T-cell (primary cell): ENCODE measurements at regions of chr15 and their contacts with region 1.

Region 1: GRCh38 chr15:41695750-41696426 is 35.7 kb downstream of the MGA start:
- DNase-seq: peak in 34 of 35 experiments; percentile 1 to 73 (median 44)
- ATAC-seq: peak; percentile 90 to 98 (median 96)
- H3K4me3 ChIP-seq: peak overlapping the region in 1 of 2 donors; percentile 6
- H3K4me3 Mint-ChIP-seq: peak overlapping the region; percentile 10 to 38 (median 10)
- H3K27ac ChIP-seq: peak overlapping the region; percentile 52
- H3K27ac Mint-ChIP-seq: peak overlapping the region; percentile 75 to 82
- H3K4me1 ChIP-seq: peaks cover 6 to 7% of the 10 kb centered on the region in 2 experiments
- H3K4me1 Mint-ChIP-seq: peaks cover 50 to 72% (median 54%) of the 10 kb centered on the region in 3 donors
- H3K27me3 ChIP-seq: no peaks in the 10 kb centered on the region
- H3K27me3 Mint-ChIP-seq: no peaks in the 10 kb centered on the region

Region 2: GRCh38 chr15:41557673-41558399 is 138.1 kb before region 1 on chr15:
- CTCF ChIA-PET with region 1: interaction called in 1 of 2 experiments, 3 read pairs
- POLR2A ChIA-PET with region 1: interaction called, 6 to 12 read pairs
- DNase-seq: peak; percentile 59 to 84 (median 74)
- ATAC-seq: peak; percentile 81 to 91 (median 83)
- H3K4me3 ChIP-seq: peak overlapping the region; percentile 43 to 52
- H3K4me3 Mint-ChIP-seq: peak overlapping the region; percentile 84 to 89 (median 86)
- H3K27ac ChIP-seq: peak overlapping the region; percentile 51
- H3K27ac Mint-ChIP-seq: peak overlapping the region; percentile 93 to 94
- H3K4me1 ChIP-seq: peaks cover 8 to 22% of the 10 kb centered on the region in 2 experiments
- H3K4me1 Mint-ChIP-seq: peaks cover 20 to 29% (median 23%) of the 10 kb centered on the region in 3 donors
- H3K27me3 ChIP-seq: peaks cover 2 to 34% of the 10 kb centered on the region in 2 experiments
- H3K27me3 Mint-ChIP-seq: peaks cover 10 to 21% of the 10 kb centered on the region in 2 donors

Region 3: GRCh38 chr15:41656188-41656587 is 39.7 kb before region 1 on chr15:
- CTCF ChIA-PET with region 1: no interaction called
- POLR2A ChIA-PET with region 1: no interaction called
- DNase-seq: no peak
- ATAC-seq: no peak
- H3K4me3 ChIP-seq: no peak overlapping the region
- H3K4me3 Mint-ChIP-seq: no peak overlapping the region
- H3K27ac ChIP-seq: no peak overlapping the region
- H3K27ac Mint-ChIP-seq: no peak overlapping the region
- H3K4me1 ChIP-seq: peaks cover 3 to 17% of the 10 kb centered on the region in 2 experiments
- H3K4me1 Mint-ChIP-seq: peaks cover 15 to 21% (median 17%) of the 10 kb centered on the region in 3 donors
- H3K27me3 ChIP-seq: peaks cover 0 to 3% of the 10 kb centered on the region in 2 experiments
- H3K27me3 Mint-ChIP-seq: peaks cover 0 to 3% of the 10 kb centered on the region in 2 donors

Region 4: DNA sequence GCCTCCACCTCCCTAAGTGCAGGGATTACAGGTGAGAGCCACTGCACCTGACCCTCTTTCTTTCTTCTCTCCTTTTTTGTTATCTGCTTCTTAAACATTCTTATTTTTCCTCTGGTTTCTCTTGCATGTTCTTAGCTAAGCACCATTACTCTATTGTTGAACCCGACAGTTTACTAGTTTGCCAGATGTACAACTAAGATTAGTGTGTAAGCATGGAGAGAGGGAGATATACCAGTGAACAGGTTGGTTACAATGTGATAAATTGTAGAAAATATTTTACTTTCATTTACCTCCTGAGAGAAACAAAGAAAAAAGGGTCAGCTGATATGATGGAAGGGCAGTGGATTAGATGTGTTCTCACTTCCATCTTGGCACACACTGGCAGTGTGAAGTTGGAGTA is 857.7 kb after region 1 on chr15:
- CTCF ChIA-PET with region 1: no interaction called
- POLR2A ChIA-PET with region 1: no interaction called
- DNase-seq: no peak
- ATAC-seq: no peak
- H3K4me3 ChIP-seq: no peak overlapping the region
- H3K4me3 Mint-ChIP-seq: no peak overlapping the region
- H3K27ac ChIP-seq: no peak overlapping the region
- H3K27ac Mint-ChIP-seq: no peak overlapping the region
- H3K4me1 ChIP-seq: peaks cover 2 to 10% of the 10 kb centered on the region in 2 experiments
- H3K4me1 Mint-ChIP-seq: peaks cover 30 to 41% (median 39%) of the 10 kb centered on the region in 3 donors
- H3K27me3 ChIP-seq: no peaks in the 10 kb centered on the region
- H3K27me3 Mint-ChIP-seq: no peaks in the 10 kb centered on the region